ENCODE measurements at regions of chr4 and their contacts with region 1.

Region 1: DNA sequence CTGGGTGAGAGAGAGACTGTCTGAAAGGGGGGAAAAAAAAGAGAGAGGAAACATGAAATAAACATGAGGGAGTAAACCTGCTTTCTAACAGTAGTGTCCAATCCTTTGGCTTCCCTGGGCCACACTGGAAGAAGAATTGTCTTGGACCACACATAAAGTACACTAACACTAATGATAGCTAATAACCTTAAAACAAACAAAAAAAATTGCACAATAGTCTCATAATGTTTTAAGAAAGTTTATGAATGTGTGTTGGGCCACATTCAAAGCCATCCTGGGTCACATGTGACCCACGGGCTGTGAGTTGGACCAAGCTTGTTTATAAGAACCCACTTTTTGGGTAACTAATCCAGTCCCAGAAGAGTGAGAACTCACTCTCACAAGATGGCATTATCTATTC is 30.3 kb downstream of the PDS5A start:
- DNase-seq: no peak
- H3K4me3 Mint-ChIP-seq: no peak overlapping the region
- H3K27ac Mint-ChIP-seq: peak overlapping the region; percentile 5
- H3K4me1 Mint-ChIP-seq: peaks cover 54% of the 10 kb centered on the region
- H3K27me3 Mint-ChIP-seq: no peaks in the 10 kb centered on the region

Region 2: GRCh38 chr4:39706334-39706733 is 241.1 kb before region 1 on chr4:
- CTCF ChIA-PET with region 1: no interaction called
- intact Hi-C with region 1: no loop called
- DNase-seq: no peak
- H3K4me3 Mint-ChIP-seq: no peak overlapping the region
- H3K27ac Mint-ChIP-seq: no peak overlapping the region
- H3K4me1 Mint-ChIP-seq: peaks cover 38% of the 10 kb centered on the region
- H3K27me3 Mint-ChIP-seq: no peaks in the 10 kb centered on the region

Region 3: GRCh38 chr4:39908284-39908683 is 39.1 kb before region 1 on chr4:
- CTCF ChIA-PET with region 1: no interaction called
- intact Hi-C with region 1: no loop called
- DNase-seq: no peak
- H3K4me3 Mint-ChIP-seq: no peak overlapping the region
- H3K27ac Mint-ChIP-seq: no peak overlapping the region
- H3K4me1 Mint-ChIP-seq: peaks cover 5% of the 10 kb centered on the region
- H3K27me3 Mint-ChIP-seq: no peaks in the 10 kb centered on the region

Region 4: GRCh38 chr4:39931441-39931901 is 16.0 kb before region 1 on chr4:
- CTCF ChIA-PET with region 1: interaction called, 3 read pairs
- intact Hi-C with region 1: loop called (anchors 2 kb)
- DNase-seq: peak; percentile 31
- H3K4me3 Mint-ChIP-seq: no peak overlapping the region
- H3K27ac Mint-ChIP-seq: peak overlapping the region; percentile 42
- H3K4me1 Mint-ChIP-seq: peaks cover 50% of the 10 kb centered on the region
- H3K27me3 Mint-ChIP-seq: no peaks in the 10 kb centered on the region

Measured in activated naive CD4-positive, alpha-beta T cell treated with anti-CD3 and anti-CD28 coated beads for 36 hours (primary cell).